OCI-LY7 (cell line): ENCODE measurements at regions of chrX and their contacts with region 1.

Region 1: GRCh38 chrX:12791257-12792228 is at the start of gene PRPS2:
- DNase-seq: peak; percentile 60
- H3K4me3 ChIP-seq: peak within 1 kb of the TSS; percentile 91
- H3K27ac ChIP-seq: peak within 1 kb of the TSS; percentile 37
- H3K4me1 ChIP-seq: peaks cover 14% of the 10 kb centered on the region
- CTCF ChIP-seq: no peak
- total RNA-seq, gene PRPS2: 57.5 and 58.5 TPM in 2 replicates

Region 2: GRCh38 chrX:12480956-12481355 is 310.6 kb before region 1 on chrX:
- CTCF ChIA-PET with region 1: no interaction called
- POLR2A ChIA-PET with region 1: no interaction called
- intact Hi-C with region 1: no loop called
- DNase-seq: no peak
- H3K4me3 ChIP-seq: no peak overlapping the region
- H3K27ac ChIP-seq: no peak overlapping the region
- H3K4me1 ChIP-seq: no peaks in the 10 kb centered on the region
- CTCF ChIP-seq: no peak

Region 3: GRCh38 chrX:12825801-12826200 is 34.3 kb after region 1 on chrX:
- CTCF ChIA-PET with region 1: no interaction called
- POLR2A ChIA-PET with region 1: no interaction called
- intact Hi-C with region 1: no loop called
- DNase-seq: no peak
- H3K4me3 ChIP-seq: no peak overlapping the region
- H3K27ac ChIP-seq: no peak overlapping the region
- H3K4me1 ChIP-seq: no peaks in the 10 kb centered on the region
- CTCF ChIP-seq: no peak

Region 4: DNA sequence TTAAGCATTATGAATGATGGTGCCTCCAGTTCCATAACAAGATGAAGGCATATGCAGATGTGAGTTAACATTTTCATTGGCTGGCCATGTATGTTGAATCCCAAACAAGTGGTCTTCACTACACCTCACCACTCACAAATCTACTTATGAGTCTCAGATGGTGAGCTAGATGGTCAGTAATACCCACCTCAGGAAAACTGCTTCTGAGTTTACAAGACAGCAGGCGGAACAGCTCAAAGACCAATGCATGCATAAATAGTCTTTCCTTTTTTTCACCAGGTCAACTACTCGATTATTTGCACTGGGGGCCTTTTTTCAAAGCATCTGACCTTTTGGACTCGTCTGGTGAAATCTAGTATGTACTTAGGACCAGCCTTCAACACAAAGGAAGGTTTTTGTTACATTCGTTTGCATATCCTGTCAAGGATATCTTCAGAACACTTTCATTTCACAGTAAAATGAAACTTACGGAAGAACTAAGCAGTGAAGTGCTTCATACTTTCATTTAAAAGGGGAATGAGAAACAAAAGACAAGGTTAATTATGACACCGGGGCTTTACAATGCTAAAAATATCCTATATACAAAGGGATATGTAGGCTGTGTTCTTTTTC is 52.2 kb after region 1 on chrX:
- CTCF ChIA-PET with region 1: no interaction called
- POLR2A ChIA-PET with region 1: no interaction called
- intact Hi-C with region 1: no loop called
- DNase-seq: peak; percentile 44
- H3K4me3 ChIP-seq: peak overlapping the region; percentile 48
- H3K27ac ChIP-seq: peak overlapping the region; percentile 43
- H3K4me1 ChIP-seq: peaks cover 23% of the 10 kb centered on the region
- CTCF ChIP-seq: no peak

Region 5: DNA sequence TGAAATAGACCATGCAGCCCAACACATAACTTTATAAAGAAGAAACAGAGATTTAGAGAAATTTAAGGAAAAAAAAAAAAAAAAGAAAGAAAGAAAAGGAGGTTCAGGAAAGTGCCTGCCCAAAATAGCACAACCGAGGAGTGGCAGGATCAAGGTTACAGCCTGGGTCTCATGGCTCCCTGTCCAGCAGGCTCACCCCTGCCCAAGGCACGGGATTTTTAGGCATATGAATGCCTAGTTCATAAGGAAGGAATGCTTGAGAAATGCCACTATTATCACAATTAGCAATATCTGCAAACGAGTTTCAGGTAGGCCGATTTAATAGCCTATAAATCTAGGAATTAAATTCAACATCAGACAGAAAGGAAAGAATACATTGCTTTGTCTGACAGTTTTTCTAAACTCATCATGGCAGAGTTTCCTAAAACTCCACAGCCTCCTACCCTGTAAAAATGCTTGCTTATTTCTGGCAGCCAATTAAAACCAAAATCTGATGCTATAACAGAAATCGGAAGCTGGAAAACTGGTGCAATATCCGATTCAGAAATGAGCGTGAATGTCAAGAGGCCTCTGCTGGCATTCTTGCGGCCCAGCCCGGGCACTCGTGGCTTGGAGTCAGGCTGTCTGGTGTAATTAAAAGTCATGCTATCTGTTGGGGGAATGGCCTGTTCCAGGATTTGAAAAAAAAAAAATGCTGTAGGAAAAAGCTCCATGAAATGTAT is 1174.7 kb after region 1 on chrX:
- CTCF ChIA-PET with region 1: interaction called, 17 read pairs
- POLR2A ChIA-PET with region 1: no interaction called
- intact Hi-C with region 1: no loop called
- DNase-seq: no peak
- H3K4me3 ChIP-seq: no peak overlapping the region
- H3K27ac ChIP-seq: no peak overlapping the region
- H3K4me1 ChIP-seq: no peaks in the 10 kb centered on the region
- CTCF ChIP-seq: no peak